ENCODE measurements at regions of chr6 and their contacts with region 1.

Region 1: GRCh38 chr6:118800394-118801071 is 93.4 kb upstream of the ASF1A start:
- DNase-seq: peak; percentile 64 to 79
- ATAC-seq: peak; percentile 93 to 98
- H3K4me3 ChIP-seq: no peak overlapping the region
- H3K27ac ChIP-seq: peak overlapping the region in 1 of 2 experiments; percentile 44; a peak in 1 of 6 replicates
- H3K4me1 ChIP-seq: no peaks in the 10 kb centered on the region
- CTCF ChIP-seq: peak; percentile 76
- EP300 ChIP-seq: no peak
- POLR2A ChIP-seq: no peak
- RAD21 ChIP-seq: peak; percentile 71 to 75

Region 2: GRCh38 chr6:118146584-118146983 is 653.9 kb before region 1 on chr6:
- CTCF ChIA-PET with region 1: no interaction called
- POLR2A ChIA-PET with region 1: no interaction called
- DNase-seq: no peak
- ATAC-seq: no peak
- H3K4me3 ChIP-seq: no peak overlapping the region
- H3K27ac ChIP-seq: no peak overlapping the region
- H3K4me1 ChIP-seq: no peaks in the 10 kb centered on the region
- CTCF ChIP-seq: no peak
- EP300 ChIP-seq: no peak
- POLR2A ChIP-seq: no peak
- RAD21 ChIP-seq: no peak

Region 3: GRCh38 chr6:118787724-118788423 is 12.7 kb before region 1 on chr6:
- CTCF ChIA-PET with region 1: interaction called, 14 read pairs
- POLR2A ChIA-PET with region 1: no interaction called
- DNase-seq: no peak
- ATAC-seq: no peak
- H3K4me3 ChIP-seq: no peak overlapping the region
- H3K27ac ChIP-seq: no peak overlapping the region
- H3K4me1 ChIP-seq: peaks cover 10% of the 10 kb centered on the region; the same call in 2 of the 3 replicates
- CTCF ChIP-seq: no peak
- EP300 ChIP-seq: no peak
- POLR2A ChIP-seq: no peak
- RAD21 ChIP-seq: no peak

Measured in A549 (cell line).